GM10248 (cell line): ENCODE measurements at regions of chr20 and their contacts with region 1.

Region 1: DNA sequence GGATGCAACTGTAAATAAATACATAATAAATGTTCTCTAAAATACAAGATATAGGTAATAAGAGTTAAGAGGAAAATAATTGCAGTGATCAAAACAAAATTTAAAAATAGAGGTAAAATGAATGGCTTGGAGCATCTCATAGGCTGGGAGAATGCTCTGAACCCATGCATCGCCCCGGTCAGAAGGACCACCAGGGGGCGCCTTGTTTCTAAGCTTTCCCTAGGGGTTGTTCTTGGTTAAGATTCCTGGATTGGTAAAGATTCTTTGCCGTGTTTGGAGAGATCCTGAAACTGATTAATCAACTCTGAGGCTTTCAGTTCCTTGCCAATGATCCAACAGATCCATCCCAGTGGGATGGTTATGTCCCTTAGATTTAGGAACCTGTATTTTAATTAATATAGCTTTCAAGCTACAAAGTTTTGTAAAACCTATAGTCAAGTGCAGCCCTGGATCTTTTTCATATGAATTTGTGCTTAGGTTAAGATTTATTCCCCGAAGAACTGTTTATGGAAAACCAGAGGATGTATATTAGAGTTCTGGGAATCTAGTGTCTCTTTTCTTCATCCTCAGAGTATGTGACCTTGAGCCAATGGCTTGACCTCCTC is 45.3 kb upstream of the PRELID3B start:
- DNase-seq: peak; percentile 67
- CTCF ChIP-seq: peak; percentile 81

Region 2: GRCh38 chr20:59004466-59004762 is 83.5 kb before region 1 on chr20:
- CTCF ChIA-PET with region 1: no interaction called
- POLR2A ChIA-PET with region 1: no interaction called
- DNase-seq: no peak
- CTCF ChIP-seq: no peak

Region 3: DNA sequence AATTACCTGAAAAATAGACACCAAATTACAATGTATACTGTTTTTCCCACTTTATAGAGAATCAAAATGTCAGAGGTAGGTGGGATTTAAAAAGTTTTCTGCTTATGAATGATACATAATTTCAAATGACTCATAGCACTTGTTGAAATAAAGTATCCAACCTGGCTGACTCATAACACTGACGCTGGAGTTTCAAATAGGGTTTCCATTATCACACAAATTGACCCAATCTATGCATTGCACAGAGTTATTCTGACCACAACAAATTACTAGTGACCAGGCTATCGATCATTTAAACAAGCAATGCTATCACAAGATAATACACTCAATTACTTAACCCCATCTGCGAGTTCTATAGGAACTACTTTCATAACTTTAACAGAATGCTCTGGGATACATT is 13.5 kb before region 1 on chr20:
- CTCF ChIA-PET with region 1: interaction called, 10 read pairs
- POLR2A ChIA-PET with region 1: no interaction called
- DNase-seq: no peak
- CTCF ChIP-seq: no peak

Region 4: DNA sequence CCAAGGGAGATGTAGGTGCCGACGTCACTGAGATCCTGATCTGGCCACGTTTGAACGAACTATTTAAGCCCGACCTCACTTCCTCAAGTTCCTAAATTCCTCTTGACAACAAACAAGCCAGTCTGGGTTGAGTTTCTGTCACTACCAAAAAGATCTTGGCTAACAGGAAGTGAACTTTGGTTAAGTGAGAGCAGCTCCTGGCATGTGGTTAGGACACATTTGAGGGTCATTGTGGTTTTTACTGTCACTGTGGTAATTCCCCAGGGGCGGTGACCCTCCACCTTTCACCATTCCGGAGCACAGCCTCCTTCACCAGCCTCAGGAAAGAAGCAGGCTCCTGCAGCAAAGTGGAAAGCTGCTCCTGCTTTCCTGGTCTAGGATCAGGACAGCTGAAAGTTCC is 32.6 kb after region 1 on chr20:
- CTCF ChIA-PET with region 1: interaction called, 13 read pairs
- POLR2A ChIA-PET with region 1: no interaction called
- DNase-seq: peak; percentile 28
- CTCF ChIP-seq: no peak

Region 5: GRCh38 chr20:59207742-59208357 is 119.9 kb after region 1 on chr20:
- CTCF ChIA-PET with region 1: interaction called, 115 read pairs
- POLR2A ChIA-PET with region 1: no interaction called
- DNase-seq: peak; percentile 86
- CTCF ChIP-seq: peak; percentile 79

Region 6: DNA sequence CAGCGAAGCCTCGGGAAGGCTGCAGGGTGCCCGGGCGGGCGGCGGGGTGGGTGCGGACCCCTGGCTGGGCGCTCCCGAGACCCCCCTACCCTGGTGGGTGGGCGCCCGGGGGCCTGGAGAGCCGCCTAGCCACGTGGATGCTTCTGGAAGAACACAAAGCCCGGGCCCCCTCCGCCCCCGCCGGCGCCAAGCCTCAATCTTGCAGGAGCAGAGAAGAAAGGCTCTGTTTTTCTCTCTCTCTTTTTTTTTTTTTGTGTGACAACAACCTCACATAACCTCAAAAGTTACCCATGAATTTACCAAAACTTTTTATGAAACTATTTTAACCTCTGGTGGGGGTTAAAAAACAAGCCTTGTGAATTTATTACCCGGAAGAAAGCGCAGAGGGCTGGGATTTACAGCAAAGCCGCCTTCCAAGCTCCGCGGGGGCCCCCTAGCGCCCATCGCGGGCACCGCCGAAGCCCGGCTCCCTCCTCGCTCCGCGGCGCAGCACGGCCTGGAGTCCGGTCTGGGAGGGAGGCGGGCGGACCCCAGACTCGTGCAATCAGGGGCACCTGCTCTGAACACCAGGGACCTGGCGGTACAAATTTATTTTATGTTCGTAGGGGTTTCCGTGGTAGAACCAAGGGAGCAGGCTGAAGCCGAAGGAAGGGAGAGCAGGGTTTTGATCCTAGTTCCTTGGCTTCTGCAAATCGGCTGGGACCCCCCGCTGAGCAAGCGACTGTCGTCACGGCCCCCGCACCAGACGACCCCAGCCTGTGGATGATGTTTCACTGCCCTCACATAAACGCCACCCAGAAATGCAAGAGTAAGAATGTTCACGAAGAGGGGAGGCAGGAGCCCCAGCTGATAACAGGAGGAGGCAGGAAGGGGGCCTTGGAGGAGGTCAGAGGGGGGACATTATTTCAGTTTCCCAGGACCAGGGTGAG is 134.6 kb after region 1 on chr20:
- CTCF ChIA-PET with region 1: interaction called, 42 read pairs
- POLR2A ChIA-PET with region 1: no interaction called
- DNase-seq: peak; percentile 88
- CTCF ChIP-seq: peak; percentile 91